Head of caudate nucleus (tissue), 42 donors: ENCODE measurements at regions of chr9 and their contacts with region 1.

Region 1: DNA sequence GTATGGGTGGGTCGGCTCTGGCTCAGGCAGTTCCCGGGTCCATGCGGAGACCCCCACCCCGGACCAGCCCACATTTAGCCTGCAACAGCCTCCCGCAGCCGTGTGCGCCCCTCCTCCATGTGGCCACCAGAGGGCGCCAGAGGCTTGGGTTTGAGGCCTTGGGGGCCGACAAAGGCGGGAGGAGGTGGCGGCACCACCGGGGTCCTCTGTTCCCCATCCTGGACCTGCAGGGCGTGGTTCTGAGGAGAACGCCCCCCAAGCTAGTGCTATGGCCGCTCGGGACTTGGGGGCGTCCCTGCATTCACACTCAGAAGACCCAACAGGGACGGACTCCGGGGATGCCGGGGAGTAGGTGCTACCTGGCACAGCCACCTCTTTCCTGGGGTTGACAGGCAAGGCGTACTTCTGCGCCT is 16.5 kb downstream of the ASS1 start:
- DNase-seq: peak in 40 of 42 donors; percentile 22 to 90 (median 71)

Region 2: GRCh38 chr9:130682490-130683121 is 221.4 kb after region 1 on chr9:
- intact Hi-C with region 1: loop called (anchors 2 kb)
- DNase-seq: peak; percentile 67 to 93 (median 86)